ENCODE measurements at regions of chr18 and their contacts with region 1.

Region 1: GRCh38 chr18:35290073-35290735 is at the start of gene ZSCAN30:
- DNase-seq: peak; percentile 99
- H3K4me3 Mint-ChIP-seq: peak within 1 kb of the TSS; percentile 100
- H3K27ac Mint-ChIP-seq: peak within 1 kb of the TSS; percentile 95
- H3K4me1 Mint-ChIP-seq: peaks cover 37% of the 10 kb centered on the region
- H3K27me3 Mint-ChIP-seq: no peaks in the 10 kb centered on the region
- total RNA-seq, gene ZSCAN30: 11.6 and 12.2 TPM in 2 replicates

Region 2: GRCh38 chr18:35029770-35030169 is 260.4 kb before region 1 on chr18:
- intact Hi-C with region 1: loop called (anchors 1 kb)
- DNase-seq: no peak
- H3K4me3 Mint-ChIP-seq: peak overlapping the region; percentile 89
- H3K27ac Mint-ChIP-seq: peak overlapping the region; percentile 97
- H3K4me1 Mint-ChIP-seq: peaks cover 40% of the 10 kb centered on the region
- H3K27me3 Mint-ChIP-seq: no peaks in the 10 kb centered on the region

Region 3: DNA sequence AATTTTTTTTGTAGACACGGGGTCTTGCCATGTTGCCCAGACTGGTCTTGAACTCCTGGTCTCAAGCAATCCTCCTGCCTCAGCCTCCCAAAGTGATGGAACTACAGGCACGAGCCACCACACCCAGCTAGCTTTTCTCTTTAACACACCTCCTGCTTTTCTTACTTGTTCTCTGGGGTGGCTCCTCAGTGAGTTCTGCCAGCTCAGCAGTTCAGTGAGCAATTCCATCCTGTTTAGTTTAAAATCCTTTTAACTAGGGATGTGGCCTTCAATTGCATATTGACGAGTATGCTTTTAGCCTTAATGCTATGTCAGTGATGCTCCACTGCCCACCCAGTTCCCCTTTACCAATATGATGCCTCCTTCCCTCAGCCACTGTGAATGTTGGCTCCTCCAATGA is 33.3 kb before region 1 on chr18:
- intact Hi-C with region 1: no loop called
- DNase-seq: no peak
- H3K4me3 Mint-ChIP-seq: no peak overlapping the region
- H3K27ac Mint-ChIP-seq: no peak overlapping the region
- H3K4me1 Mint-ChIP-seq: no peaks in the 10 kb centered on the region
- H3K27me3 Mint-ChIP-seq: no peaks in the 10 kb centered on the region

Region 4: GRCh38 chr18:35267161-35267651 is 23.0 kb before region 1 on chr18:
- intact Hi-C with region 1: loop called (anchors 2 kb)
- DNase-seq: peak; percentile 79
- H3K4me3 Mint-ChIP-seq: peak overlapping the region; percentile 83
- H3K27ac Mint-ChIP-seq: peak overlapping the region; percentile 86
- H3K4me1 Mint-ChIP-seq: peaks cover 13% of the 10 kb centered on the region
- H3K27me3 Mint-ChIP-seq: no peaks in the 10 kb centered on the region

Region 5: DNA sequence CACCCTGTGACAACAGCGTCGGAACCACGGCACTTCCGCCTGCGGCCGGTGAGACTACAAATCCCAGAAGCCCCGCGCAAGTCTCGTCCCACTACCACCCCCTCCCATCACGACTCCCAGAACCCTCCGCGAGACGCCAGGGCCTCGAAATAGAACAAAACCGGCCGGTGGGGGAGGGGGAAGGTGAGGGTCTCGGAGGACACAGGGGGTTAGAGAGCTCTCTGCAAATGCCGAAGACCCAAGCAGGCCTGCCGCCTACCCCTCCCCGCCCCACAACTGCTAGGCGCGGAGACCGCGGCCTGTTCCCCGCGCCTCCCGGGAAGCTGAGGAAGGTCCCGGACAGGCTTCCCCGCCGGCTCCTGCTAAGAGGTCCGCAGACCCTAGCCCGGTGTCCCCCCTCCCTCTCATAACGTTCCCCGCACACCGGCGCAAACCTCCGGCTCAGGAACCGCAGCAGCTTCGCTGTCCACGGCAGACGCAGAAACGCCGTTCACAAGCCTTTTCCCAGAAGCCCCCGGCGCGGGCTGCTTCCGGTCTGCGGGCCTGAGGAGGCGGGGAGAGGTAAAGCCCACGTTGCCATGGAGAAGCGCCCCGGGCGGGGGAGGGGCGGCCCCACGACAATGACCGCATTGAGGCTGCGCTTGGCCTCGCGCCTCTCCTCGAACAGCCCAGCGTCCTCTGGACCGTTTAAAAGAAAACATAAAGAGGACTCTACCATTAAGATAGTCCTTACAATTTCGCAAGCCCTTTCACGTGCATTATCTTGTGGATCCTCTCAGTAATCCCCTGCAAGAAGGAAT is 53.9 kb after region 1 on chr18 and contains the start of gene ZNF24:
- intact Hi-C with region 1: loop called (anchors 1 kb)
- DNase-seq: peak; percentile 98
- H3K4me3 Mint-ChIP-seq: peak within 1 kb of the TSS; percentile 100
- H3K27ac Mint-ChIP-seq: peak within 1 kb of the TSS; percentile 94
- H3K4me1 Mint-ChIP-seq: peaks cover 33% of the 10 kb centered on the region
- H3K27me3 Mint-ChIP-seq: peaks cover 1% of the 10 kb centered on the region
- total RNA-seq, gene ZNF24: 53.9 and 57.8 TPM in 2 replicates

Region 6: DNA sequence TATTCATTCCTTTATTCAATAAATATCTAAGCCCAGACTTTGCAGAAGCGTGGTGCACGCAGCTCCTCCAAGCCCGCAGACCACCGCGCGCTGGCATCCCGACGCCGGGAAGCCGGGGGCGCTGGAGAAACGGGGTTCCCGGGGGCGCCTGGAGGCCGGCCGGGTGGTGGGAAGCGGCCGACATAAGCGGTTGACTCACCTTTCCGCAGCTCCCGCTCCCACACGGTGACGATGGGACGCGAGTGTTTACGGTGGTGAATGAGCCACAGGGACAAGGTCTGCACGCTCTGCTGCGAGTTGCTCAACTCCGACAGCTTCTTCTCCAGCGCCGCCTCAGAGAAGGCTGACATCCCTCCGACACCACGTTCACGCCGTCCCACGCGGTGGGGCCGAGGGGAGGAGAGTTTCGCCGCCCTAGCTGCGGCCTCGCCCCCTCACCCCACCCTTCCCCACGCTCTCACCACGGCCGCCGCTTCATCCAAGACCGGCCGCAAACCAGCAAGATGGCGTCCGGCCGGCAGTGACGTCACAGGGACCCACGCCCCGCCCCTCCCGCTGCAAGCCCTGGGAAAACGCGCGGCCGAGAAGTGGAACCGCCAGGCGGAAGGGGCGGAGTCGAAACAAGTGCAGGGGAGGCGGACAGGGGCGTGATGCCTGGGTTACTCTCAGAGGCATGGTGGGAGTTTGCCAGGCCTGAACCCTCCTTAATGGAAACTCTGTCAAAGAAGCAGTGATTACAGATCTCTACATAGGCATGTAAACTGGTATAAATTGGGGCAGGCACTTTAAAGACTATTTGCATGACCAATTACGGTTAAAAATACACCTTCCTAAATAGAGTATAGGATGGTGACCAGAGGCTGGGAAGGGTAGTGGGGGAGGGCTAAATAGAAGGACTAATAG is 777.1 kb after region 1 on chr18 and contains the start of gene RPRD1A:
- intact Hi-C with region 1: loop called (anchors 10 kb)
- DNase-seq: peak; percentile 99
- H3K4me3 Mint-ChIP-seq: peak within 1 kb of the TSS; percentile 95
- H3K27ac Mint-ChIP-seq: peak within 1 kb of the TSS; percentile 97
- H3K4me1 Mint-ChIP-seq: peaks cover 28% of the 10 kb centered on the region
- H3K27me3 Mint-ChIP-seq: peaks cover 7% of the 10 kb centered on the region
- total RNA-seq, gene RPRD1A: 24.6 and 27.4 TPM in 2 replicates